Heart right ventricle (tissue), 16 donors: ENCODE measurements at regions of chr1 and their contacts with region 1.

Region 1: DNA sequence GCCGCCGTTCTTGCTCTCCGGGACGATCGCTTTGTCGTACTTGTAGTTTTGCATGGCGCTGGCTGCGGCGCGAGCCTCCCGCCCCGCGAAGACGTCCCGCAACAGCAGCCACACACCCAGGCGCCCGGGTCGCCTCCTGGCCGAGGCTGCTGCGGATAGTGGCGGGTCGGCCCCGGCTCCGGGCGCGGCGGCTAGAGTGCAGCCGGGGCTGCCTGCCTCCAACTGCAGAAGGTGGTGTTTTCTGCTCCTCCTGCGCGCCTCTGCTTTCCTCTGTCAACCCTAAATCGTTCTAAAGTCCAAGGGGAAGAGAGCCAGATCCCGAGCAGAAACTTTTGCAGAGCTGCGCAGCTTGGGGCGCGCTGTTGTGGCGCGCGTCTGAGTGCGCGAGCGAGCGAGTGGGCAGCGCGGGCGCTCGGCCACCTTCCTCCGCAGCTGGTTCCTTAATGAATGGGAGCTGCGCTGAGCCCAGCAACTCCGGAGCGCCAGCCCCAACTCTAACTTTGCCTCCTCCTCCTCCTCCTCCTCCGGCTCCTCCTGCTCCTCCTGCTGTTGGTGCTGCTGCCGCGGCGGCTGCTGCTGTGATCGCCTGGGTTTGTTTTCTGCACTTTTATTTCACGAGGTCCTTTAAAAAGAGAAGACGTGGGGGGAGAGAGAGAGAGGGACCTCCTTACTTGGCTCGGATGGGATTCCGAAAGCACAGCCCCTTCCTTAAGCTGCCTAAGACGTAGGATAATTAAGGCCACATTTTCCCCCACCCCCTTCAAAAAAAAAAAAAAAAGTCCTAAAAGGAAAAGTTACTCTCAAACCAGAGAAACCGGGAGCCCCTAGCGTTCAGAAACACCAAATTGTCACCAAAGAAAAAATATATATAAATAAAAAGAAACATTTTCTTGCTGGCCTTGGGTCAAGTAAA is at the start of gene PLPP3:
- DNase-seq: peak; percentile 86 to 89
- ATAC-seq: peak; percentile 84 to 93 (median 88)
- H3K4me3 ChIP-seq: peak within 1 kb of the TSS; percentile 75 to 98 (median 94)
- H3K27ac ChIP-seq: peak within 1 kb of the TSS; percentile 93 to 99 (median 98)
- H3K4me1 ChIP-seq: peaks cover 0 to 46% (median 21%) of the 10 kb centered on the region in 9 donors
- H3K27me3 ChIP-seq: no peaks in the 10 kb centered on the region
- CTCF ChIP-seq: peak; percentile 23 to 71 (median 51)
- total RNA-seq, gene PLPP3: 59.4 to 136 (median 81.4) TPM

Region 2: DNA sequence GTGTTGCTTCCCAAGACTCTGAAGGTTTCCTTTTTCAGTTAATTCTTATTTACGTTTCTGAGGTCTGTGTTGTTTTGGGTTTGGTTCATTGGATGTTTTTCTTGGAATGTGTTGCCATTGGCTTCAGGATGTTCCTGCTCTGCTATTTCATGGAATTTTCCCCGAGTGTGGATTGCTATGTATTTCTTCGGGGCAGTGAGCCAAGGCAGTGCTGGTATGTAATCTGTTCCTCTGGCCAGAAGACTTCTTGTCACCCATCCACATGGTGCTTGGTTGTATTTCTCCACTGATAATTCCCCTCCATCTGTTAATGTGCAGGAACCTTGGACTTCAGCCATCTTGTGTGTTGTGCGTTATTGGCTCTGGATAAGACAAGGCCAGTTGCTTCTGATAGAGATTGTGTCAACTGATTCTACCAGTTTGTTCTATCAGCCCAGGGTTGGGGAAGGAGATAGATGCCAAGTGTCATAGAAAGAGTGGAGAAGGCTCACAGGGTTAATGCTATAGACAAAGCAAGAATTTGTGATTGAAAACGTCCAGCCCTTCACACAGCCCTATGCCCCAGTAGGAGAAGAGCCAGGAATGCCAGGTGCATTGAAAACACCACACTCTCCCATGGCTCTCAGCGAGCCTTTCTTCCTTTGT is 505.1 kb before region 1 on chr1:
- intact Hi-C with region 1: loop called in 3 of 10 experiments (anchors 5 to 10 kb)
- DNase-seq: peak; percentile 27 to 83
- ATAC-seq: peak; percentile 77 to 92 (median 85)
- H3K4me3 ChIP-seq: no peak overlapping the region
- H3K27ac ChIP-seq: peak overlapping the region in 9 of 10 donors; percentile 13 to 65 (median 53)
- H3K4me1 ChIP-seq: peaks cover 0 to 27% (median 20%) of the 10 kb centered on the region in 9 donors
- H3K27me3 ChIP-seq: no peaks in the 10 kb centered on the region
- CTCF ChIP-seq: no peak

Region 3: GRCh38 chr1:56284928-56285327 is 294.3 kb before region 1 on chr1:
- intact Hi-C with region 1: loop called in 3 of 10 experiments (anchors 5 to 10 kb)
- DNase-seq: peak in 1 of 2 donors; percentile 23
- ATAC-seq: peak in 7 of 8 donors; percentile 64 to 86 (median 79)
- H3K4me3 ChIP-seq: no peak overlapping the region
- H3K27ac ChIP-seq: peak overlapping the region in 7 of 10 donors; percentile 5 to 73 (median 51)
- H3K4me1 ChIP-seq: peaks cover 0 to 35% (median 18%) of the 10 kb centered on the region in 9 donors
- H3K27me3 ChIP-seq: no peaks in the 10 kb centered on the region
- CTCF ChIP-seq: no peak

Region 4: DNA sequence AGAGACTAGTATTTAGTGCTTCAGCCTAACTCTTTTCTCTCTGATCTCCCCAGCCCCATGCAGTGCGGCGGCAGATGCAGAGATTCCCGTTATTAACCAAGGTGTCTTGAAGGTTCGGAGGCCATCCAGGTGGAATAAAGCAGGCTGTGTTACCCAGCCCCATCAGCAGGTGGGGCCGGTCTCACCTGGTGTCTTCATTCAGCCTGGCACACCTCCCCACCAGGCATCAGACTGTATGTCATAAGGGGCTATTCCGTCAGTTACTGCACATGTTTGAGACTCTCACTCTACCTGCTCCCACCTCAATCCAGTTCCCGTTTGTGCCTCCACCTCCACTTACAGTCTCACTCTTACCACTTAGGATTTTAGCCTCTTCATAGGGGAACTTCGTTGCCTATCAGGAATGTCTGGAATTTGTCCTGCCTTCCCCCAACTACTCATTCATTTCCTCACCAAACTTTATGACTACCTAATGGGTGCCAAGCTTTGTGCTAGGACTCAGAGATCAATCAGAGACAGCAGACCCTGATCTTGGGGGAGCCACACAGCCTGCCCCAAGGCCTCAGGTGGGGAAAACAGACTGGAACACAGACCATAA is 170.0 kb before region 1 on chr1:
- intact Hi-C with region 1: loop called in 3 of 10 experiments (anchors 5 to 10 kb)
- DNase-seq: peak in 1 of 2 donors; percentile 17
- ATAC-seq: peak in 2 of 8 donors; percentile 22 to 41
- H3K4me3 ChIP-seq: no peak overlapping the region
- H3K27ac ChIP-seq: no peak overlapping the region
- H3K4me1 ChIP-seq: peaks cover 0 to 53% (median 14%) of the 10 kb centered on the region in 9 donors
- H3K27me3 ChIP-seq: no peaks in the 10 kb centered on the region
- CTCF ChIP-seq: peak in 8 of 9 donors; percentile 26 to 54 (median 45)

Region 5: GRCh38 chr1:56446531-56447098 is 132.6 kb before region 1 on chr1:
- intact Hi-C with region 1: loop called in 1 of 10 experiments (anchors 2 kb)
- DNase-seq: peak; percentile 39 to 46
- ATAC-seq: peak; percentile 49 to 96 (median 81)
- H3K4me3 ChIP-seq: no peak overlapping the region
- H3K27ac ChIP-seq: peak overlapping the region; percentile 41 to 75 (median 56)
- H3K4me1 ChIP-seq: peaks cover 11 to 53% (median 38%) of the 10 kb centered on the region in 9 donors
- H3K27me3 ChIP-seq: no peaks in the 10 kb centered on the region
- CTCF ChIP-seq: no peak

Region 6: DNA sequence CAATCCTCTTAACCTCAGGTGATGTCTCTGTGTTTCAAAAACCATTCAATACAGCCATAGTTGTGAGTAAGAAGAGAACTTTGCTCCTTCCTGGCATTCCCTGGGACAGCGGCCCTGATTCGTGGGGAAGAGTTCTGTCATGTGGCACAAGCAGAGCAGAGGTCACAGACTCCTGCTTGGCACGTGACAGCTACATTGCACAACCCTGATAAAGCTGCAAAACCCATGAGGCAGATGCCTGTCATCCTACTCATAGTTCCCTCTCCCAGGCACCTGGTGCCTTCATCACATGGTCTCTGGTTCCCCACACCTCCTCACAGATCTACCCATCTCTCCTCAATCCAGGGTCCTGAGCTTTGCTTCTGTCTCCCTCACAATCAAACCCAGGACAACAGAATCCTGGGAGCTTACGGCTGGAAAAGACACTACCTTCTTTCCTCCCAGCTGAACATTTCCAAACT is 70.7 kb before region 1 on chr1:
- intact Hi-C with region 1: loop called in 8 of 10 experiments (anchors 5 to 10 kb)
- DNase-seq: peak; percentile 48 to 72
- ATAC-seq: peak; percentile 51 to 88 (median 78)
- H3K4me3 ChIP-seq: no peak overlapping the region
- H3K27ac ChIP-seq: peak overlapping the region; percentile 20 to 83 (median 74)
- H3K4me1 ChIP-seq: peaks cover 10 to 91% (median 83%) of the 10 kb centered on the region in 9 donors
- H3K27me3 ChIP-seq: no peaks in the 10 kb centered on the region
- CTCF ChIP-seq: no peak

Region 7: DNA sequence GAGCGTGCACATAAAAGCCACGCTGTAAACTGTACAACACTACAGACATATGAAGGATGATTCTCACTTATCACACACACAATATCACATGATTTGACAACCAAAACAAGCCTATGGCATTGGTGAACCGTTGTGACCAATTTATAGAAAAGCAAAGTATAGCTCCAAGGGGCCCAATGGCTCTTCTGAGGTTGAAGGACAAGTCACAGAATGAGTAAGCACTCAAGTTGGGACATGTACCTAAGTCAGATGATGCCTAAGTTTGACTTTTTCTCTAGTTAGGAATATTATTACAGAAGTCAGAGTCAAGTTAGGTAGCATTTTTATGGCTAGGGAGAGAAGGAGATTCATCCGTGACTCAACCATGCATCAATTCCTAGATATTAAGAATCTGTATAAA is 45.6 kb before region 1 on chr1:
- intact Hi-C with region 1: loop called in 2 of 10 experiments (anchors 5 kb)
- DNase-seq: no peak
- ATAC-seq: no peak
- H3K4me3 ChIP-seq: no peak overlapping the region
- H3K27ac ChIP-seq: peak overlapping the region in 5 of 10 donors; percentile 28 to 77 (median 31)
- H3K4me1 ChIP-seq: peaks cover 20 to 100% (median 98%) of the 10 kb centered on the region in 9 donors
- H3K27me3 ChIP-seq: no peaks in the 10 kb centered on the region
- CTCF ChIP-seq: no peak